ENCODE measurements at regions of chr15 and their contacts with region 1.

Region 1: DNA sequence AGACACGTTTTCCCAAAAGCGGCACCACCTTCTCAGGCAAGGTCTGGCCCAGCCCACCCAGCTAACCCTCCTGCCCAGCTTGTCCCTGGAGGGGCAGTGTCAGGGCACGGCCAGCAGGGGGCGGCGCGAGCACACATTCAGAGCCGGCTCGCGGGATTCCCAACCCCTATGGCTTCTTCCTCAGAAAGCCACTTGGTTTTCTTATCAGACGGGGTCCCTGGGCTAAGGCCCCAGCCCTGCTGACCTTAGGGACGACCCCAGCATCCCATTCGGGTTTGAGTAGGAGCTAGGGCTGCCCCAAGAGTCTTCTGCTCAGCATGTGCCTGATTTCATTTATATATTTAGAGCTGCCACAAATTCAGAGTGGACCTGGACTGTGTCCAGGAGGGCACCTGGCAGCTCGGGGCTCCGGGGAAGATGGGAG is 14.5 kb downstream of the RLBP1 start:
- DNase-seq: peak; percentile 82
- H3K4me3 Mint-ChIP-seq: no peak overlapping the region
- H3K27ac Mint-ChIP-seq: no peak overlapping the region
- H3K4me1 Mint-ChIP-seq: peaks cover 29% of the 10 kb centered on the region
- H3K27me3 Mint-ChIP-seq: no peaks in the 10 kb centered on the region

Region 2: GRCh38 chr15:89057504-89058133 is 149.3 kb before region 1 on chr15:
- CTCF ChIA-PET with region 1: interaction called, 25 read pairs
- intact Hi-C with region 1: loop called (anchors 1 kb)
- DNase-seq: peak; percentile 91
- H3K4me3 Mint-ChIP-seq: no peak overlapping the region
- H3K27ac Mint-ChIP-seq: no peak overlapping the region
- H3K4me1 Mint-ChIP-seq: peaks cover 11% of the 10 kb centered on the region
- H3K27me3 Mint-ChIP-seq: no peaks in the 10 kb centered on the region

Region 3: DNA sequence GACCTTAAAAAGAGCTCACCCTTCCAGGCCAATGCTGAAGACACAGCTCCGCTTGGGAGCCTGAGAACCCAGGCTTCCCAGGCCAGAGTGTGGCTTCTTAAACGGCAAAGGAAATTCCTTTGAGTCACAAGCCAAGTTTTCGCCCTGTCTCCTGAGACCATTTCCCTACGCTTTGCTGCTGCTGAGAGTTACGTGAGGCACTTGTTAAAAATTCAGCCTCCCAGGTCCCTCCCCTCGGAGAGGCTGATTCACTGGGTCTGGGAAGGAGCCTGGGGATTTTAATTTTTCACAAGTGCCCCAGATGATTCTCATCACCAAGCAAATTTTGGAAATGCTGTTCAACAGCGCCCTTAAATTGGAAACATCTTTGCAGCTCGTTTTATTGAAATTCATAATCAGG is 11.1 kb before region 1 on chr15:
- CTCF ChIA-PET with region 1: interaction called, 15 read pairs
- intact Hi-C with region 1: no loop called
- DNase-seq: no peak
- H3K4me3 Mint-ChIP-seq: no peak overlapping the region
- H3K27ac Mint-ChIP-seq: peak overlapping the region; percentile 41
- H3K4me1 Mint-ChIP-seq: peaks cover 26% of the 10 kb centered on the region
- H3K27me3 Mint-ChIP-seq: no peaks in the 10 kb centered on the region

Region 4: GRCh38 chr15:89230277-89230676 is 23.4 kb after region 1 on chr15:
- CTCF ChIA-PET with region 1: interaction called, 20 read pairs
- intact Hi-C with region 1: no loop called
- DNase-seq: no peak
- H3K4me3 Mint-ChIP-seq: no peak overlapping the region
- H3K27ac Mint-ChIP-seq: no peak overlapping the region
- H3K4me1 Mint-ChIP-seq: no peaks in the 10 kb centered on the region
- H3K27me3 Mint-ChIP-seq: peaks cover 7% of the 10 kb centered on the region

Region 5: GRCh38 chr15:89278307-89278706 is 71.4 kb after region 1 on chr15:
- CTCF ChIA-PET with region 1: interaction called, 17 read pairs
- intact Hi-C with region 1: no loop called
- DNase-seq: no peak
- H3K4me3 Mint-ChIP-seq: no peak overlapping the region
- H3K27ac Mint-ChIP-seq: no peak overlapping the region
- H3K4me1 Mint-ChIP-seq: peaks cover 13% of the 10 kb centered on the region
- H3K27me3 Mint-ChIP-seq: no peaks in the 10 kb centered on the region

Region 6: GRCh38 chr15:89329329-89330084 is 122.6 kb after region 1 on chr15:
- CTCF ChIA-PET with region 1: interaction called, 12 read pairs
- intact Hi-C with region 1: no loop called
- DNase-seq: peak; percentile 61
- H3K4me3 Mint-ChIP-seq: peak overlapping the region; percentile 8
- H3K27ac Mint-ChIP-seq: peak overlapping the region; percentile 80
- H3K4me1 Mint-ChIP-seq: peaks cover 47% of the 10 kb centered on the region
- H3K27me3 Mint-ChIP-seq: no peaks in the 10 kb centered on the region

Region 7: GRCh38 chr15:89346516-89347231 is 139.8 kb after region 1 on chr15:
- CTCF ChIA-PET with region 1: no interaction called
- intact Hi-C with region 1: no loop called
- DNase-seq: no peak
- H3K4me3 Mint-ChIP-seq: no peak overlapping the region
- H3K27ac Mint-ChIP-seq: no peak overlapping the region
- H3K4me1 Mint-ChIP-seq: peaks cover 6% of the 10 kb centered on the region
- H3K27me3 Mint-ChIP-seq: peaks cover 4% of the 10 kb centered on the region

Region 8: DNA sequence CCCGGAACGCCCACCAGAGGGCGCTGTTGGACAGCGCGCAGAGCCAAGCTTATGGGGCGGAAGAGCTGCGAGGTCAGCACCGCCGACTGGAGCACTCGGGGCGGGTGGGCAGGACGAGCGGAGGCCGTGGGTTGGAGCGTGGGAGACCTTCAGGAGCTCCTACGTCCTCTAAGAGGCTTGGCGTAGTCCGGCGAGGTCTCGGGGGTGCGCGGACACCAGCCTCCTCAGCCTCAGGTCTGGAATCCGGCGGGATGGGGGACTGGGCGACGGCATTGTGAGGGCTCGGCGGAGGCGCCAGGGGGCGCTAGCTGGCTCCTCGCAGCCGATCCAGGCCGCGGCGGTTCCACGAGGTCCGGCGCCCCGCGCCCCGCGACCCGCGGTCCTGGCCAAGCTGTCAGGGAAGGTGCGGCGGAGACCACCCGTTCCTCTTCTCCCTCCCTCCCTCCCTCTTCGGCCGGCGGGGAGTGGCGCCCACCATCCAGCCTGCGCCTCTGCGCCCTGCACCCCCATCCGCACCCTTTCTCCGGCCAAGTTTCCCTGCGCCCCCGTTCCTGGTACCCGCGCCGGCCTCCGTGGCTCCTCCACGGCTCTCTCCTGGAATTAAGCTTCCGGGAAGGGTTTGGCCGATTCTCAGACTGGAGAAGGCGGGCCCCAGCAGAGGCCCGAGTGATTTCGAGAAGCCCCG is 152.0 kb after region 1 on chr15:
- CTCF ChIA-PET with region 1: interaction called, 22 read pairs
- intact Hi-C with region 1: no loop called
- DNase-seq: peak; percentile 87
- H3K4me3 Mint-ChIP-seq: peak overlapping the region; percentile 77
- H3K27ac Mint-ChIP-seq: no peak overlapping the region
- H3K4me1 Mint-ChIP-seq: peaks cover 14% of the 10 kb centered on the region
- H3K27me3 Mint-ChIP-seq: peaks cover 81% of the 10 kb centered on the region

Measured in activated naive CD4-positive, alpha-beta T cell treated with anti-CD3 and anti-CD28 coated beads for 36 hours (primary cell).